CD8-positive, alpha-beta T cell (primary cell): ENCODE measurements at regions of chr15 and their contacts with region 1.

Region 1: GRCh38 chr15:44584162-44584749 is 47.3 kb downstream of the EIF3J start:
- DNase-seq: peak; percentile 27 to 74 (median 58)
- ATAC-seq: peak; percentile 86
- H3K4me3 ChIP-seq: no peak overlapping the region
- H3K4me3 Mint-ChIP-seq: no peak overlapping the region
- H3K27ac ChIP-seq: no peak overlapping the region
- H3K27ac Mint-ChIP-seq: peak overlapping the region; percentile 8
- H3K4me1 ChIP-seq: no peaks in the 10 kb centered on the region
- H3K4me1 Mint-ChIP-seq: peaks cover 16% of the 10 kb centered on the region
- H3K27me3 ChIP-seq: no peaks in the 10 kb centered on the region
- H3K27me3 Mint-ChIP-seq: no peaks in the 10 kb centered on the region
- CTCF ChIP-seq: peak; percentile 28

Region 2: GRCh38 chr15:44231842-44232241 is 352.4 kb before region 1 on chr15:
- CTCF ChIA-PET with region 1: no interaction called
- POLR2A ChIA-PET with region 1: no interaction called
- intact Hi-C with region 1: no loop called
- DNase-seq: no peak
- ATAC-seq: no peak
- H3K4me3 ChIP-seq: no peak overlapping the region
- H3K4me3 Mint-ChIP-seq: no peak overlapping the region
- H3K27ac ChIP-seq: no peak overlapping the region
- H3K27ac Mint-ChIP-seq: no peak overlapping the region
- H3K4me1 ChIP-seq: no peaks in the 10 kb centered on the region
- H3K4me1 Mint-ChIP-seq: no peaks in the 10 kb centered on the region
- H3K27me3 ChIP-seq: no peaks in the 10 kb centered on the region
- H3K27me3 Mint-ChIP-seq: peaks cover 11% of the 10 kb centered on the region
- CTCF ChIP-seq: no peak

Region 3: GRCh38 chr15:44738340-44738984 is 154.2 kb after region 1 on chr15:
- CTCF ChIA-PET with region 1: interaction called, 19 read pairs
- POLR2A ChIA-PET with region 1: no interaction called
- intact Hi-C with region 1: no loop called
- DNase-seq: peak in 2 of 9 experiments; percentile 69 to 78
- ATAC-seq: no peak
- H3K4me3 ChIP-seq: no peak overlapping the region
- H3K4me3 Mint-ChIP-seq: peak overlapping the region; percentile 15
- H3K27ac ChIP-seq: peak overlapping the region in 1 of 2 experiments; percentile 91
- H3K27ac Mint-ChIP-seq: peak overlapping the region; percentile 78
- H3K4me1 ChIP-seq: peaks cover 50% of the 10 kb centered on the region
- H3K4me1 Mint-ChIP-seq: peaks cover 57% of the 10 kb centered on the region
- H3K27me3 ChIP-seq: no peaks in the 10 kb centered on the region
- H3K27me3 Mint-ChIP-seq: no peaks in the 10 kb centered on the region
- CTCF ChIP-seq: peak; percentile 78